ENCODE measurements at regions of chr1 and their contacts with region 1.

Region 1: DNA sequence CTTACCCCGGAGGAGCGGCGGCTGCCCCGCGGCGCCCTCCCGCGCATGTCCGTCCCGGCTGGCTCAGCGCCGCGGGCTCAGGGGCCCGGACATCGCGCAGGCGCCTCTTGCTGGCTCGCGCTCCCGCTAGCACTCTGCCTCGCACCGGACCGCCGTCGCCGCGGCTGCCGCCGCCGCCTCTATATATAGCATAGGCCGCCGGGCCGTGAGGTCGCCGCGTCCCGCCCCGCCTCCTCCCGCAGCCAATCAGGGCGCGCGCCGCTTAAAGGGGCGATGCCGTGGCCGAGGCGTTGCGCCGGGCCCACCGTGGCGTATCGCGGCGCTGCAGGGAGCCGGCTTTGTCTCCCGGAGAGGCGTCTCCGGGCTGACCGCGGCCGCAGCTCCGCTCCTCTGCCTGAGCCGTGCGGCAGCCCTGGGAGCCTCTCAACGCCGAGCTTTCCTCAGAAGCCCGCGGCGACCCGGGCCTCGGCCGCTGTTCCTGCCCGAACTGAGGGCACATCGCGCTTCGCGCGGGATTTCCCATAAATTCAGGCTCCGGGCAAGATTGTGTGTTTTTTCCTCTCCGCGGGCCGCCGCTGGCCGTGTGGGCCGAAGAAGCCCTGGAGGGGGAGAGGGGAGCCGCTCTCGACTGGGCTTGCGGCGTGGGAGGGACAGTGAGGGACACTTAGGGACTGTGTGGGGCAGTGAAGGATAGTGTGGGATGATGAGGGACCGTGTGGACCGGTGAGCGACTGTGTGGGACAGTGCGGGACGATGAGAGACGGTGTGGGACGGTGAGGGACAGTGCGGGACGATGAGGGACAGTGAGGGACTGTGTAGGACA is at the start of gene ERRFI1:
- DNase-seq: peak; percentile 95 to 98 (median 97)
- H3K4me3 ChIP-seq: peak within 1 kb of the TSS; percentile 68
- H3K27ac ChIP-seq: peak within 1 kb of the TSS; percentile 94 to 99
- H3K4me1 ChIP-seq: peaks cover 10% of the 10 kb centered on the region
- H3K27me3 ChIP-seq: no peaks in the 10 kb centered on the region
- CTCF ChIP-seq: peak in 2 of 3 donors; percentile 36 to 37
- EP300 ChIP-seq: peak; percentile 35
- POLR2A ChIP-seq: peak; percentile 99
- total RNA-seq, gene ERRFI1: 61.3 to 256 (median 110) TPM

Region 2: GRCh38 chr1:7983086-7983778 is 43.1 kb before region 1 on chr1:
- intact Hi-C with region 1: loop called in 2 of 4 experiments (anchors 5 kb)
- DNase-seq: no peak
- H3K4me3 ChIP-seq: no peak overlapping the region
- H3K27ac ChIP-seq: no peak overlapping the region
- H3K4me1 ChIP-seq: peaks cover 1% of the 10 kb centered on the region
- H3K27me3 ChIP-seq: no peaks in the 10 kb centered on the region
- CTCF ChIP-seq: no peak
- EP300 ChIP-seq: no peak
- POLR2A ChIP-seq: no peak

Region 3: GRCh38 chr1:8137481-8138244 is 111.3 kb after region 1 on chr1:
- intact Hi-C with region 1: loop called in 2 of 4 experiments (anchors 5 to 10 kb)
- DNase-seq: peak in 2 of 5 donors; percentile 53 to 56
- H3K4me3 ChIP-seq: no peak overlapping the region
- H3K27ac ChIP-seq: peak overlapping the region; percentile 7 to 67
- H3K4me1 ChIP-seq: peaks cover 19% of the 10 kb centered on the region
- H3K27me3 ChIP-seq: no peaks in the 10 kb centered on the region
- CTCF ChIP-seq: no peak
- EP300 ChIP-seq: no peak
- POLR2A ChIP-seq: no peak

Region 4: DNA sequence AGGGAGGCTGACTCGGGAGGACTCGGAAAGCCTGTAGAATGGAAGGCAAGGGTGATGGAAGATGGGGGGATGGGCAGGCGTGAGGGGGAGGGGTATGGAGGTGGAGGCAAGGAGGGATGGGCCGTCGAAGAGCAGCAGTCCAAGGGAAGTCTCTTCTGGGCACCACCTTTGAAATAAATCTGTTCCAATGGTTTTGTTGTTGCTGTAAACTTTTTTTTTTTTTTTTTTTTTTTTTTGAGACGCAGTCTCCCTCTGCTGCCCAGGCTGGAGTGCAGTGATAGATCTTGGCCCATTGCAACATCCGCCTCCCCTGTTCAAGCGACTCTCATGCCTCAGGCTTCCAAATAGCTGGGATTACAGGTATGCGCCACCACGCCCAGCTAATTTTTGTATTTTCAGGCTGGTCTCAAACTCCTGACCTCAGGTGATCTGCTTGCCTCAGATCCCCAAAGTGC is 212.5 kb after region 1 on chr1:
- intact Hi-C with region 1: loop called in 2 of 4 experiments (anchors 5 to 10 kb)
- DNase-seq: peak; percentile 36 to 72 (median 52)
- H3K4me3 ChIP-seq: no peak overlapping the region
- H3K27ac ChIP-seq: no peak overlapping the region
- H3K4me1 ChIP-seq: peaks cover 7% of the 10 kb centered on the region
- H3K27me3 ChIP-seq: no peaks in the 10 kb centered on the region
- CTCF ChIP-seq: no peak
- EP300 ChIP-seq: no peak
- POLR2A ChIP-seq: no peak

Region 5: DNA sequence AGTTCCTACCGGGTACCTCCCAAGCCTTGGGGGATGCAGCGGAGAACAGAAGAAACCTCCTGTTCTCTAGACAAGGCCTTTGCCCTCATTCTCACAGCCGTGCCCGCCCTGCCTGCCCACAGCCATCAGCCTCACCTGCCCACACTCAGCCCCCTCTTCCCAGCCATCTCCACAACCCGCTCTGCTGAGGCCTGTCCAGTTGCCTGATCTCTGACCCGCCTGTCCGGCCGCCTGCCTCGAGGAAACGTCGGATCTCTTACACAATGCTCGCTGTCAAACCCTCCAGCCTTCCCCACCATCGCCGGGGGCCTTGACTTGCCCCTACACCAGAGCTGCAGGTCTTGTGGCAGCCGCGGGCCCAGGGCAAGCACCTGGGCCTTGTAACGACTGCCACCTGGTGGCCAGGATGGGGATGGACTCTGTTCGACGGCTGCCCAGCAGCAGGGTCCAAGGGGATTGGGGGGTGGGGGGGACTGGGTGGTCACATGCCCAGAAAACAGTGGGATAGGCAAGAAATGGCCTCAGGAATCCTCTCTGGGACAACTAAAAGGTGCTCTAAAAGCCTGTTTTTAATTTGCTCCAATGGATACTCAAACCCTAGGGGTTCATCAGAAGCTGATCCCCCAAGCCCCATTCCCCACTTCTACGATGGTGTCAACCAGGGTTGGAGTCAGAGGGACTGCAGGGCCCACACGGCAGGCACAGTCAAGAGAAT is 322.6 kb after region 1 on chr1:
- intact Hi-C with region 1: loop called in 1 of 4 experiments (anchors 10 kb)
- DNase-seq: peak; percentile 59 to 79 (median 75)
- H3K4me3 ChIP-seq: no peak overlapping the region
- H3K27ac ChIP-seq: no peak overlapping the region
- H3K4me1 ChIP-seq: peaks cover 24% of the 10 kb centered on the region
- H3K27me3 ChIP-seq: no peaks in the 10 kb centered on the region
- CTCF ChIP-seq: peak; percentile 47 to 81 (median 65)
- EP300 ChIP-seq: no peak
- POLR2A ChIP-seq: no peak

Region 6: GRCh38 chr1:8495928-8496401 is 469.6 kb after region 1 on chr1:
- intact Hi-C with region 1: no loop called
- DNase-seq: no peak
- H3K4me3 ChIP-seq: no peak overlapping the region
- H3K27ac ChIP-seq: no peak overlapping the region
- H3K4me1 ChIP-seq: no peaks in the 10 kb centered on the region
- H3K27me3 ChIP-seq: no peaks in the 10 kb centered on the region
- CTCF ChIP-seq: no peak
- EP300 ChIP-seq: no peak
- POLR2A ChIP-seq: no peak

Region 7: DNA sequence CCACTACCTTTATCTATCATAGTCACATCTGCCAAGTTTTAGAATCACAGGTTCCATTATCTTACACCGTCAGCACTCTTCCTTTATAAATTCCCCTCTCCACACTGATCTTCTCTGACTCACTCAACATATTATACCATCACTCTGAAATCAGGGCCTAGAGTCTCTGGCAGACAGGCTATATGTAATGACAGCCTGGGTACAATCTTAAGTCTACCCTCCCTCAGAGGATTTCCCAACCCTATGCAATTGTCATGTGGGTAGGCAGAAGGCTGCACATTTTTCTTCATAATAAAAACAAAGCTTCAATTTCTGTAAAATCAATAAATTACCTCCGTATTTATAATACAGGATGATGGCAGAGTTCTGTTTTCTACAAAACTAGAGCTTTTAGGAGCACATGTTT is 653.0 kb after region 1 on chr1:
- intact Hi-C with region 1: no loop called
- DNase-seq: no peak
- H3K4me3 ChIP-seq: no peak overlapping the region
- H3K27ac ChIP-seq: no peak overlapping the region
- H3K4me1 ChIP-seq: peaks cover 2% of the 10 kb centered on the region
- H3K27me3 ChIP-seq: no peaks in the 10 kb centered on the region
- CTCF ChIP-seq: no peak
- EP300 ChIP-seq: no peak
- POLR2A ChIP-seq: no peak